ENCODE measurements at regions of chr22 and their contacts with region 1.

Region 1: GRCh38 chr22:38788021-38788816 is 5.7 kb downstream of the DNAL4 start:
- DNase-seq: peak; percentile 70
- H3K4me3 ChIP-seq: no peak overlapping the region
- H3K27ac ChIP-seq: peak overlapping the region; percentile 72
- H3K4me1 ChIP-seq: peaks cover 16% of the 10 kb centered on the region
- H3K27me3 ChIP-seq: no peaks in the 10 kb centered on the region
- CTCF ChIP-seq: no peak
- POLR2A ChIP-seq: no peak

Region 2: DNA sequence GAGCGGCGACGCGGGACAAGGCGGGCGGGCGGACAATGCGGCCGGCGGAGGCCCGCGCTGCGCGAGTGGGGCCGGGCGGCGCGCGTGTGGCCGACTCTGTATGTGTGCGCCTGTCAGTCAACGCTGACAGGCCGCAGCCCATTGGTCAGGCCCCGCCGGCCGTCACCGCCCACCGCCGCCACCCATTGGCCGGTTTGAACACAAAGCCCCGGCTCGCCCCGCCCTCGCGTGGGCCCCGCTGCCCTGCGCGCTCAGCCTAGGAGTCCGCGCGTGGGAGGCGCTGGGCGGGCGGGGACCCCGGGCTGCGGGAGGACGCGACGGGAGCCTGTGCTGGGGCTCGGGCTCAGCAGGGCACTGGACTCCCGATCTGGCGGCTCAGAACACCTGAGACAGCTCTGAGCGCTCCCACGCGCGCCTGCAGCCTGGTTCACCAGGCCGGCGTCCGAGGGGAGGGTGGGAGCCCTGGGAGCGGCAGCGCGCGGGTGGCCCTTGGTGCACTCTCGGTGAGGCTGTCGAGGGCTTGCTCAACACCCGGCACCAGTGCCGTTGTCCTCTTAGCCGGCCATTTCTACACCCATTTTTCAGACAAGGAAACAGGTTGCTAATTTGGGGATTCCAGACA is 32.2 kb before region 1 on chr22 and contains the start of gene SUN2:
- CTCF ChIA-PET with region 1: no interaction called
- POLR2A ChIA-PET with region 1: no interaction called
- dilution Hi-C with region 1: no loop called
- intact Hi-C with region 1: loop called (anchors 1 kb)
- DNase-seq: peak; percentile 88
- H3K4me3 ChIP-seq: peak within 1 kb of the TSS; percentile 55 to 74 (median 58)
- H3K27ac ChIP-seq: peak within 1 kb of the TSS; percentile 63
- H3K4me1 ChIP-seq: peaks cover 22% of the 10 kb centered on the region
- H3K27me3 ChIP-seq: no peaks in the 10 kb centered on the region
- CTCF ChIP-seq: no peak
- POLR2A ChIP-seq: peak; percentile 36
- total RNA-seq, gene SUN2: 133 and 137 TPM in 2 replicates

Region 3: GRCh38 chr22:39024519-39025308 is 236.5 kb after region 1 on chr22:
- CTCF ChIA-PET with region 1: no interaction called
- POLR2A ChIA-PET with region 1: no interaction called
- dilution Hi-C with region 1: no loop called
- intact Hi-C with region 1: no loop called
- DNase-seq: no peak
- H3K4me3 ChIP-seq: no peak overlapping the region
- H3K27ac ChIP-seq: no peak overlapping the region
- H3K4me1 ChIP-seq: no peaks in the 10 kb centered on the region
- H3K27me3 ChIP-seq: no peaks in the 10 kb centered on the region
- CTCF ChIP-seq: no peak
- POLR2A ChIP-seq: no peak

Measured in endothelial cell of umbilical vein (primary cell).